ENCODE measurements at regions of chr21 and their contacts with region 1.

Region 1: GRCh38 chr21:21163904-21164303 is 165.7 kb downstream of the NCAM2 start:
- DNase-seq: peak; percentile 36 to 60 (median 40)
- ATAC-seq: peak; percentile 68
- H3K4me3 ChIP-seq: no peak overlapping the region
- H3K27ac ChIP-seq: no peak overlapping the region
- H3K4me1 ChIP-seq: no peaks in the 10 kb centered on the region
- H3K27me3 ChIP-seq: no peaks in the 10 kb centered on the region
- CTCF ChIP-seq: peak; percentile 16 to 54 (median 46)
- POLR2A ChIP-seq: no peak

Region 2: DNA sequence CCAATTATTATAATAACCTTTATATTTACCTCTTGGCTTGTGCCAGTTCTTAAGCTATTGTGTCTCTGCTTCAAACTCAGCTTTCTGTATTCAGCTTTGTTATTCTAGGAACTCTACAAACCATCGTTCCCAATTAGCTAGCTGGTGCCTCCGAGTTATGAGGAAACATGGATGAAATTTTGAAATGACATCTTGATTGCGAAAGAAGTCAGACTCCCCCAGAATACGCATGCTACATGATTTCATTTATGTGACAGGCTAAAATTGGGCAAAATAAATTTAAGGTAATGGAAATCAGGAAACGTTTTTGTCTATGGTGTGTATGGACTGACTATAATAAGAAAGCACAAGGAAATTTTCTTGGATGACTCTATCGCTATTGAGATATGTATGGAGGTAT is 422.5 kb before region 1 on chr21:
- intact Hi-C with region 1: no loop called
- DNase-seq: no peak
- ATAC-seq: no peak
- H3K4me3 ChIP-seq: no peak overlapping the region
- H3K27ac ChIP-seq: no peak overlapping the region
- H3K4me1 ChIP-seq: no peaks in the 10 kb centered on the region
- H3K27me3 ChIP-seq: no peaks in the 10 kb centered on the region
- CTCF ChIP-seq: no peak
- POLR2A ChIP-seq: no peak

Region 3: GRCh38 chr21:22791986-22792560 is 1628.2 kb after region 1 on chr21:
- intact Hi-C with region 1: loop called (anchors 10 kb)
- DNase-seq: peak; percentile 26 to 31 (median 30)
- ATAC-seq: no peak
- H3K4me3 ChIP-seq: no peak overlapping the region
- H3K27ac ChIP-seq: no peak overlapping the region
- H3K4me1 ChIP-seq: no peaks in the 10 kb centered on the region
- H3K27me3 ChIP-seq: no peaks in the 10 kb centered on the region
- CTCF ChIP-seq: peak; percentile 47 to 96 (median 61)
- POLR2A ChIP-seq: no peak

Measured in body of pancreas (tissue), 4 donors.